ENCODE measurements at regions of chr11 and their contacts with region 1.

Region 1: GRCh38 chr11:64887757-64888405 is 9.5 kb upstream of the EHD1 start:
- DNase-seq: peak; percentile 90
- H3K4me3 ChIP-seq: peak overlapping the region in 3 of 4 donors; percentile 13 to 37 (median 29)
- H3K27ac ChIP-seq: peak overlapping the region; percentile 68 to 81 (median 72)
- H3K4me1 ChIP-seq: peaks cover 0 to 14% (median 12%) of the 10 kb centered on the region in 4 donors
- H3K27me3 ChIP-seq: no peaks in the 10 kb centered on the region
- CTCF ChIP-seq: peak; percentile 94 to 100 (median 96)
- EP300 ChIP-seq: no peak
- POLR2A ChIP-seq: peak in 1 of 2 donors; percentile 7

Region 2: GRCh38 chr11:64787526-64788320 is 100.2 kb before region 1 on chr11:
- intact Hi-C with region 1: loop called (anchors 5 kb)
- DNase-seq: peak; percentile 83
- H3K4me3 ChIP-seq: no peak overlapping the region
- H3K27ac ChIP-seq: peak overlapping the region in 2 of 4 donors; percentile 26 to 49
- H3K4me1 ChIP-seq: peaks cover 0 to 9% (median 6%) of the 10 kb centered on the region in 4 donors
- H3K27me3 ChIP-seq: no peaks in the 10 kb centered on the region
- CTCF ChIP-seq: peak; percentile 26 to 70 (median 60)
- EP300 ChIP-seq: no peak
- POLR2A ChIP-seq: no peak

Region 3: GRCh38 chr11:64846998-64847666 is 40.7 kb before region 1 on chr11:
- intact Hi-C with region 1: loop called (anchors 1 kb)
- DNase-seq: peak; percentile 96
- H3K4me3 ChIP-seq: no peak overlapping the region
- H3K27ac ChIP-seq: peak overlapping the region in 2 of 4 donors; percentile 10 to 22
- H3K4me1 ChIP-seq: peaks cover 0 to 52% (median 35%) of the 10 kb centered on the region in 4 donors
- H3K27me3 ChIP-seq: peaks cover 0 to 10% (median 0%) of the 10 kb centered on the region in 3 donors
- CTCF ChIP-seq: peak; percentile 92 to 97 (median 96)
- EP300 ChIP-seq: no peak
- POLR2A ChIP-seq: no peak

Region 4: GRCh38 chr11:65497141-65498041 is 609.5 kb after region 1 on chr11:
- intact Hi-C with region 1: no loop called
- DNase-seq: peak; percentile 100
- H3K4me3 ChIP-seq: peak overlapping the region; percentile 73 to 92 (median 84)
- H3K27ac ChIP-seq: peak overlapping the region; percentile 92 to 100 (median 97)
- H3K4me1 ChIP-seq: peaks cover 3 to 48% (median 47%) of the 10 kb centered on the region in 4 donors
- H3K27me3 ChIP-seq: no peaks in the 10 kb centered on the region
- CTCF ChIP-seq: no peak
- EP300 ChIP-seq: peak; percentile 90 to 100 (median 95)
- POLR2A ChIP-seq: peak; percentile 82 to 87

Measured in sigmoid colon (tissue), 7 donors.